CD8-positive, alpha-beta T cell (primary cell): ENCODE measurements at regions of chr2 and their contacts with region 1.

Region 1: GRCh38 chr2:203327901-203328759 is at the start of gene ABI2:
- DNase-seq: peak in 8 of 9 experiments; percentile 42 to 76 (median 66)
- ATAC-seq: peak; percentile 73
- H3K4me3 ChIP-seq: peak within 1 kb of the TSS; percentile 87 to 95
- H3K4me3 Mint-ChIP-seq: peak within 1 kb of the TSS; percentile 89
- H3K27ac ChIP-seq: peak within 1 kb of the TSS; percentile 52 to 78
- H3K27ac Mint-ChIP-seq: peak within 1 kb of the TSS; percentile 83
- H3K4me1 ChIP-seq: peaks cover 20% of the 10 kb centered on the region
- H3K4me1 Mint-ChIP-seq: peaks cover 34% of the 10 kb centered on the region
- H3K27me3 ChIP-seq: no peaks in the 10 kb centered on the region
- H3K27me3 Mint-ChIP-seq: no peaks in the 10 kb centered on the region
- CTCF ChIP-seq: no peak
- total RNA-seq, gene ABI2: 17.7 to 19.7 TPM

Region 2: GRCh38 chr2:202529389-202529788 is 798.7 kb before region 1 on chr2:
- CTCF ChIA-PET with region 1: no interaction called
- POLR2A ChIA-PET with region 1: no interaction called
- intact Hi-C with region 1: no loop called
- DNase-seq: no peak
- ATAC-seq: no peak
- H3K4me3 ChIP-seq: no peak overlapping the region
- H3K4me3 Mint-ChIP-seq: peak overlapping the region; percentile 38
- H3K27ac ChIP-seq: no peak overlapping the region
- H3K27ac Mint-ChIP-seq: peak overlapping the region; percentile 34
- H3K4me1 ChIP-seq: peaks cover 24% of the 10 kb centered on the region
- H3K4me1 Mint-ChIP-seq: peaks cover 34% of the 10 kb centered on the region
- H3K27me3 ChIP-seq: no peaks in the 10 kb centered on the region
- H3K27me3 Mint-ChIP-seq: no peaks in the 10 kb centered on the region
- CTCF ChIP-seq: no peak

Region 3: GRCh38 chr2:203280428-203281064 is 47.6 kb before region 1 on chr2:
- CTCF ChIA-PET with region 1: no interaction called
- POLR2A ChIA-PET with region 1: no interaction called
- intact Hi-C with region 1: no loop called
- DNase-seq: no peak
- ATAC-seq: no peak
- H3K4me3 ChIP-seq: no peak overlapping the region
- H3K4me3 Mint-ChIP-seq: no peak overlapping the region
- H3K27ac ChIP-seq: no peak overlapping the region
- H3K27ac Mint-ChIP-seq: no peak overlapping the region
- H3K4me1 ChIP-seq: no peaks in the 10 kb centered on the region
- H3K4me1 Mint-ChIP-seq: no peaks in the 10 kb centered on the region
- H3K27me3 ChIP-seq: no peaks in the 10 kb centered on the region
- H3K27me3 Mint-ChIP-seq: no peaks in the 10 kb centered on the region
- CTCF ChIP-seq: no peak

Region 4: DNA sequence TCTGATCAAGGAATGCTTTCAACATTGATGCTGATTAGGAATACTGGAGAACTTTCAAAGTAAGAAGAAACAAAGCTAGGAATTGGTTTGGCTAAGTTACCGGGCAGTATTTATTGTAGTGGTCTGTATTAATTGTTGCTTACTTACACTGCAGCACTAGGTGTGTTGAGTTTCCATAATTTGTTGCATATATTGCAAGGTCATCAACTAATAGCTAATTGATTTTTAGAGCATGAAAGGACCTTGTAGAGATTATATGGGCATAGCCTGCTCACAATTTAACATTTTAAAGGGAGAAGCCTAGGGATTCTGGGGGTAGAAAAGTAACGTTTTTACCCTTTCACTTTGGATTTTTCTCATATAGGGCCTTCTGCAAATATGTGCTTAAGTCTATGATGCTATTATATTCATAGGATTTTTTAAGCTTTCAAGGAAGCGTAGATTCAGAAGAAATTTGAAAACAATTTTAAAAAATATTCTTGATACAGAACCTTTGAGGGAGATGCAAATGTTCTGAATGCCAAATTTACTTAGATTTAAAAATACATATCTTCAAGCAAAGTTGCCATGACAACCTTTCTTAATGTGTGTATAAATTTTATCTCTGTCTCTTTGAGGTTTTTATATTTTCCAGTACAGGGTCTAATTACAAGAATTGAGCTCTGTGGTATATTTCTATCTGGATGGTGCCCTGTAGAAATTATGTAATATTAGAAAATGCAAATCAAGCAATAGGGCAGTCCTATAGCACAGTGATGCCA is 17.3 kb before region 1 on chr2:
- CTCF ChIA-PET with region 1: interaction called, 3 read pairs
- POLR2A ChIA-PET with region 1: no interaction called
- intact Hi-C with region 1: loop called in 1 of 2 experiments (anchors 2 kb)
- DNase-seq: no peak
- ATAC-seq: no peak
- H3K4me3 ChIP-seq: no peak overlapping the region
- H3K4me3 Mint-ChIP-seq: no peak overlapping the region
- H3K27ac ChIP-seq: no peak overlapping the region
- H3K27ac Mint-ChIP-seq: no peak overlapping the region
- H3K4me1 ChIP-seq: no peaks in the 10 kb centered on the region
- H3K4me1 Mint-ChIP-seq: peaks cover 2% of the 10 kb centered on the region
- H3K27me3 ChIP-seq: no peaks in the 10 kb centered on the region
- H3K27me3 Mint-ChIP-seq: no peaks in the 10 kb centered on the region
- CTCF ChIP-seq: no peak

Region 5: GRCh38 chr2:203400816-203401585 is 72.9 kb after region 1 on chr2:
- CTCF ChIA-PET with region 1: interaction called, 6 read pairs
- POLR2A ChIA-PET with region 1: no interaction called
- intact Hi-C with region 1: loop called in 1 of 2 experiments (anchors 2 kb)
- DNase-seq: no peak
- ATAC-seq: no peak
- H3K4me3 ChIP-seq: no peak overlapping the region
- H3K4me3 Mint-ChIP-seq: no peak overlapping the region
- H3K27ac ChIP-seq: no peak overlapping the region
- H3K27ac Mint-ChIP-seq: no peak overlapping the region
- H3K4me1 ChIP-seq: no peaks in the 10 kb centered on the region
- H3K4me1 Mint-ChIP-seq: no peaks in the 10 kb centered on the region
- H3K27me3 ChIP-seq: no peaks in the 10 kb centered on the region
- H3K27me3 Mint-ChIP-seq: no peaks in the 10 kb centered on the region
- CTCF ChIP-seq: no peak